Activated B cell treated with CpG ODN at 0.5 μM for 24 hours (primary cell): ENCODE measurements at regions of chr4 and their contacts with region 1.

Region 1: GRCh38 chr4:3047464-3048286 is 26.7 kb downstream of the HTT-AS start:
- DNase-seq: peak; percentile 75
- ATAC-seq: peak; percentile 92
- H3K4me3 Mint-ChIP-seq: peak overlapping the region; percentile 47
- H3K27ac Mint-ChIP-seq: peak overlapping the region; percentile 95
- H3K4me1 Mint-ChIP-seq: peaks cover 52% of the 10 kb centered on the region
- H3K27me3 Mint-ChIP-seq: no peaks in the 10 kb centered on the region
- CTCF ChIP-seq: no peak

Region 2: DNA sequence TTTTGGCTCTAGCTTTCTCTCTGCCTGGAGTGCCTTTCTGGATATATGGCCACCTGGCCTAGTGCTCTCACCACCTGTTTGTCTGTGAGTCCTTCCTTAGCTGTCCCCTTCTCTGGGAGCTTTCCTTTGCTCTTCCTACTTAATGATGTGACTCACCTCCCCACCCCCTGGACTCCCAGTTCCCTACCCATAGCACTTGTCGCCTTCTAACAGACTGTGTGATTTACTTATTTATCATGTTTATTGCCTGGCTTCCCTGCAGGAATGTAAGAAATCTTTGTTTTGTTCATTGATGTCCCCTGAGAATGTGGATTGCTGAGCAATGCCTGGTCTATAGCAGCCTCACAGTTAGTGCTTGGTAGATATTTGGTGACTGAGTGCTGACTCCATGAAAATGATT is 185.1 kb before region 1 on chr4:
- CTCF ChIA-PET with region 1: no interaction called
- POLR2A ChIA-PET with region 1: no interaction called
- intact Hi-C with region 1: no loop called
- DNase-seq: no peak
- ATAC-seq: no peak
- H3K4me3 Mint-ChIP-seq: peak overlapping the region; percentile 46
- H3K27ac Mint-ChIP-seq: peak overlapping the region; percentile 77
- H3K4me1 Mint-ChIP-seq: peaks cover 92% of the 10 kb centered on the region
- H3K27me3 Mint-ChIP-seq: no peaks in the 10 kb centered on the region
- CTCF ChIP-seq: no peak

Region 3: DNA sequence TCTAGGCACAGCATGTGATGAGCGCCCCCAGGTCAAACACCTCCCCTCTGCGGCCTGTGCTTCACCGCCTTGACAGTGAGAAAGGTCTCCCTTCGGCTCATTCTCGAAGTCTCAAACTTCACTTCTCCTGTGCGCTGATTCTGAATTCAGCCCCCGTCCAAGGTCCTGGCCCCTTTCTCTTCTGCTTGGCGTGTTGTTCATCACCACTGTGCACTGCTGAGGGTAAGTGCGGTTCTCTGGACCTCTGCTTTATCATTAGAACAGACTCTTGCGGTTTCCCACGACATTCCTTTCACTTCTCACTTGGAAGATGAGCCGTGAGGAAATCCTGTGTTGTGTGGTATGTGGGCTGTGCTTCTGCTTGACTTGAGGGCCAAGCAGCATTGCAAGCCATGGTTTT is 14.8 kb after region 1 on chr4:
- CTCF ChIA-PET with region 1: interaction called, 3 read pairs
- POLR2A ChIA-PET with region 1: interaction called, 12 read pairs
- intact Hi-C with region 1: no loop called
- DNase-seq: no peak
- ATAC-seq: no peak
- H3K4me3 Mint-ChIP-seq: no peak overlapping the region
- H3K27ac Mint-ChIP-seq: no peak overlapping the region
- H3K4me1 Mint-ChIP-seq: peaks cover 20% of the 10 kb centered on the region
- H3K27me3 Mint-ChIP-seq: no peaks in the 10 kb centered on the region
- CTCF ChIP-seq: no peak

Region 4: DNA sequence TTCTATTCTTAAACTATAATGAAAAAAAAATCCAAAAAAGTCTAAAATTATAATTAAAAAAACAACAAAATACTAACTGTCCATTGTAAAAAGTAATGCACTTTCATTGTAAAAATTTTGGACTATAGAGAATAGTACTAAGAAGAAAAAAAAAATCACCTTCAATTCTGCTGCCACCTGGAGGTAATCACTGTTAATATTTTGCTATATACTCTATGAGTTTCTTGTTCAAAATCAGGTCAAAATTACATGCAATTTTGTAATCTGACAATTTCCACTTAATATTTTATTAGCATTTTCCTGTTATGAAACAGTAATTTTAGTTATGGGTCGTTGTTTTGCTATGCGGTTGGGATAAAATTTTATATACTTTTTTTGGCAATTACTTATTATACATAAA is 88.8 kb after region 1 on chr4:
- CTCF ChIA-PET with region 1: interaction called, 3 read pairs
- POLR2A ChIA-PET with region 1: no interaction called
- intact Hi-C with region 1: loop called (anchors 1 kb)
- DNase-seq: no peak
- ATAC-seq: no peak
- H3K4me3 Mint-ChIP-seq: no peak overlapping the region
- H3K27ac Mint-ChIP-seq: no peak overlapping the region
- H3K4me1 Mint-ChIP-seq: no peaks in the 10 kb centered on the region
- H3K27me3 Mint-ChIP-seq: no peaks in the 10 kb centered on the region
- CTCF ChIP-seq: no peak

Region 5: GRCh38 chr4:3442959-3443749 is 395.5 kb after region 1 on chr4:
- CTCF ChIA-PET with region 1: no interaction called
- POLR2A ChIA-PET with region 1: no interaction called
- intact Hi-C with region 1: loop called (anchors 1 kb)
- DNase-seq: peak; percentile 82
- ATAC-seq: peak; percentile 94
- H3K4me3 Mint-ChIP-seq: no peak overlapping the region
- H3K27ac Mint-ChIP-seq: no peak overlapping the region
- H3K4me1 Mint-ChIP-seq: no peaks in the 10 kb centered on the region
- H3K27me3 Mint-ChIP-seq: no peaks in the 10 kb centered on the region
- CTCF ChIP-seq: peak; percentile 91